ENCODE measurements at regions of chr1 and their contacts with region 1.

Region 1: DNA sequence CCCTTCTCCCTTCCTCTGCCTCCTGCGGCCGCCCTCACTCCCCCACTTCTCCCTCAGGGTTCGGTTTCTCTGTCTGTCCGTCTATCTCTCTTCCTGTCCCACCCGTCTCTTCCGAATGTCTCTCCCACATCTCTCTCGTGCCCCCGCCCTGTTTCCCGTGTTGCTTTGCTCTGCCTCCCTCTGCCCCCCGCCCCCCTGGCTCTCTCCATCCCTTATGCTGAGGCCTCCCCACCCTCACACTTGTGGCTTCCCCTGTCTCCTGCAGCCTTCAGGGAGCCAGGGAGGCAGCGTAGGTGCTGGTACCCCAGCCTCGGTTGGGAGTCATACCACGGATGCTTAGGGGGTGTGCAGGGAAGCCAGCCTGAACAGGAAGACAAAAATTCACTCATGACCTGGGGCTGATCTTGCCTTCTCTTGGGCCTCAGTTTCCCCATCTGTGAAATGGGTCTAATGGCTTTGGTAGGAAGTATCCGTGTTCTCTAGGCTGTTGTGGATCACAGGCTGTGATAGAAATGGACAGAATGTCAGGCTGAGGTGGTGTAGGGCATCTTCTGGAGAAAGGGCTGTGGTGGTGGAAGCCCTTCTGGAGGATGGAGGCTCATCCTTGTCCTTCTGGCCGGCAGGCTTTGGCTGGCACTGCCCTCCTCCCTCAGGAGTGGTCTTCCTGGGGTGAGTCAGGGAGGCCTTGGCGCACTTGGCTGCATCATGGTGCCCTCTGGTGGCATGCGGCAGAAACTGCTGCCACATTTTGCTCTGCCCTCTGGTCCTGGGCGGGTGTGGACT is 55.5 kb downstream of the FOXO6 start:
- DNase-seq: no peak
- H3K4me3 ChIP-seq: no peak overlapping the region
- CTCF ChIP-seq: peak; percentile 94

Region 2: GRCh38 chr1:41268154-41268770 is 148.5 kb before region 1 on chr1:
- CTCF ChIA-PET with region 1: interaction called, 110 read pairs
- POLR2A ChIA-PET with region 1: no interaction called
- DNase-seq: no peak
- H3K4me3 ChIP-seq: no peak overlapping the region
- CTCF ChIP-seq: peak; percentile 93

Region 3: DNA sequence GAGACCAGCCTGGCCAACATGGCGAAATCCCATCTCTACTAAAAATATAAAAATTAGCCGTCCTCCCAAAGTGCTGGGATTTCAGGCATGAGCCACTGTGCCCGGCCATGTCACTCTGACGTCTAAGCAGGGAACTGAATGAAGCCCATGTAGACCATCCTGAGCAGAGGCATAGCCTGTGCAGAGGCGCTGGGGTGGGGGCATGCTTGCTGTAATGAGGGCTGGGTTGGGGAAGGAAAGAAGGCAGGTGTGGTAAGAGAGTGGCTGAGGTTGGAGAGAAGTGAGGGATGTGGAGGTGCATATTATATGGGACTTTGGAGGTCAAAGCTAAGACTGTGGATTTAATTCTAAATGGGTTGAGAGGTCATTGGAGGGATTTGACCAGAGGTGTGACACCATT is 127.5 kb before region 1 on chr1:
- CTCF ChIA-PET with region 1: interaction called, 365 read pairs
- POLR2A ChIA-PET with region 1: no interaction called
- DNase-seq: no peak
- H3K4me3 ChIP-seq: no peak overlapping the region
- CTCF ChIP-seq: no peak

Region 4: GRCh38 chr1:41322835-41323627 is 93.7 kb before region 1 on chr1:
- CTCF ChIA-PET with region 1: interaction called, 38 read pairs
- POLR2A ChIA-PET with region 1: no interaction called
- DNase-seq: no peak
- H3K4me3 ChIP-seq: no peak overlapping the region
- CTCF ChIP-seq: peak; percentile 56

Region 5: GRCh38 chr1:41394959-41395956 is 21.5 kb before region 1 on chr1:
- CTCF ChIA-PET with region 1: interaction called, 19 read pairs
- POLR2A ChIA-PET with region 1: no interaction called
- DNase-seq: no peak
- H3K4me3 ChIP-seq: no peak overlapping the region
- CTCF ChIP-seq: no peak

Region 6: DNA sequence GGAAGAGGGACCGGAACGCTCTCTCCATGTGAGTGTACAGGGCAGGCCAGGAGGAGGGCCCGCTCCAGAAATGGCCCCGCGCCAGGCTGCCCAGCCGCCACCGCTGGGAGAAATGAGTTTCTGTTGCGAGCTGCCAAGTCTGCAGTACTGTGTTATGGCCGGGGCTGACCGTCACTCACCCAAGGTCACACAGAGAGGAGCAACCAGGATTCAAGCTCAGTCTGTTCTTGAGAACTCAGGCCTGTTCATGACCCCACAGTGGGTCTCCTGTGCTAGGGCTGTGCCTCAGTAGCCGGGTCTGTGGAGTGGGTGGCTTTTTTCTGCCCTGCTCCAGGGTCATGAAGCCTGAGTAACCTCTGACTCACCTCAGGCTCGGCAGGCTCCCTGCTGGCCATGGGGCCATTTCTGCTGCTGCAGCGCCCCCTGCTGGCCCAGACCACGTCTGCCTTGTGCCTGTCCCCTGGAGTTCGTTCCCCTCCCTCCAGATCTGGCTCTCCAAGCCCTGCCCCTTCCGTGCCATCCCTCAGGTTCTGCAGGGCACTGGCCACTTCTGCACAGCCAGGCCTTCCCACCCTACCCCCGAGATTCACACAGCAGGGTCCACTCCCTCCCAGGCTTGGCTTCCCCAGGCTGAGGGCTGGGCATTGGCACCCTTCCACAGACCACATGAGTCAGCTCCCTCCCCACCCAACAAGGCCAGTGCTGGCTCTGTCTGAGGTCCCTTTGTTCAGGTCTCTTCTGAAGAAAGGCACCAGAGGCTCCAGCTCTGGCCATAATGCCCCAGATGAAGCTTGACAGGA is 15.9 kb after region 1 on chr1:
- CTCF ChIA-PET with region 1: interaction called, 178 read pairs
- POLR2A ChIA-PET with region 1: no interaction called
- DNase-seq: peak; percentile 33
- H3K4me3 ChIP-seq: no peak overlapping the region
- CTCF ChIP-seq: peak; percentile 98